ENCODE measurements at regions of chr12 and their contacts with region 1.

Region 1: GRCh38 chr12:54993161-54993835 is 8.7 kb upstream of the TESPA1 start:
- DNase-seq: peak; percentile 83
- H3K4me3 ChIP-seq: no peak overlapping the region
- H3K27ac ChIP-seq: no peak overlapping the region
- H3K4me1 ChIP-seq: peaks cover 51% of the 10 kb centered on the region
- CTCF ChIP-seq: peak; percentile 96

Region 2: DNA sequence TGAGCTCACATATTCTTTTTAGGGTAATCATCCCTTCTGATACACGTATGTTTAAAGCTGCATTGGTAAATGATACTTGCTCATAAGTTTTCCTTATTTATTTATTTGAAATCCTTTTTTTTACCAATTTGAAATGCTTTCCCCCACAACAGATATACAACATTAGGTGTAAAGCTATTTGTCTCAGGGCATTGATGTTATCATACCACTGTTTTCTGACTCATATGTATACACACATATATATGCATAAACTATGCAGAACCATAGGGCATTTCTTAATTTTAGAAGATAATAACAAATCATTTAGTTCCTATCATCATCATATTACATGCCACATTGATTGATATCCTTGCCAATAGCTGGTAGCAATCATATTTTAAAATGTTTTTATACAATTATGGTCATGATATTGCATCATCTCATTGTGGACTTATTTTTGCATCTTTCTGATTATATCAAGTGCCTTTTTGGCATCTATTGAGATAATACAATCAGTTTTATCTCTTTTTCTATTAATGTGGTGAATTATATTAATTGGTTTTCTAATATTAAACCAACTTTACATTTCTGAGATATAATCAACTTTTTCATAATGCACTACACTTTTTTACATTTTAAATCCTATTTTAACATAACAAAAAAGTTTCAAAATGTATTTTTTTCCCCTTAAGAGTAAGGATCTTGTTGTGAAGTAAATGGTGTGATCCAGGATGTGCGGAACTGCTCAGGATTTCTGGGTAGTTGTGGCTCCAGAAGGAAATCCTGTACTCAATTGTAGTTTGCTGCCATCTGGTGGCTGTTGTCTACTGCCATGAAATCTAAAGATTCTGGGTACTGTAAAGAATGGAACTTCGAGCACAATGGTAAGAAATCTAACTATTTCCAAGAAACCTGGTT is 149.6 kb after region 1 on chr12:
- CTCF ChIA-PET with region 1: interaction called, 3 read pairs
- POLR2A ChIA-PET with region 1: no interaction called
- intact Hi-C with region 1: loop called (anchors 1 kb)
- DNase-seq: peak; percentile 76
- H3K4me3 ChIP-seq: no peak overlapping the region
- H3K27ac ChIP-seq: no peak overlapping the region
- H3K4me1 ChIP-seq: no peaks in the 10 kb centered on the region
- CTCF ChIP-seq: peak; percentile 93

Measured in OCI-LY7 (cell line).